GM10248 (cell line): ENCODE measurements at regions of chr2 and their contacts with region 1.

Region 1: GRCh38 chr2:64523666-64524603 is at the start of gene AFTPH:
- DNase-seq: peak; percentile 98
- CTCF ChIP-seq: no peak

Region 2: GRCh38 chr2:64538764-64539433 is 15.0 kb after region 1 on chr2:
- CTCF ChIA-PET with region 1: interaction called, 15 read pairs
- POLR2A ChIA-PET with region 1: interaction called, 8 read pairs
- DNase-seq: no peak
- CTCF ChIP-seq: no peak

Region 3: GRCh38 chr2:64568836-64569235 is 44.9 kb after region 1 on chr2:
- CTCF ChIA-PET with region 1: interaction called, 125 read pairs
- POLR2A ChIA-PET with region 1: no interaction called
- DNase-seq: no peak
- CTCF ChIP-seq: no peak

Region 4: GRCh38 chr2:64609227-64609941 is 85.4 kb after region 1 on chr2:
- CTCF ChIA-PET with region 1: interaction called, 25 read pairs
- POLR2A ChIA-PET with region 1: interaction called, 3 read pairs
- DNase-seq: peak; percentile 91
- CTCF ChIP-seq: peak; percentile 82

Region 5: GRCh38 chr2:64644177-64645004 is 120.5 kb after region 1 on chr2:
- CTCF ChIA-PET with region 1: interaction called, 10 read pairs
- POLR2A ChIA-PET with region 1: no interaction called
- DNase-seq: peak; percentile 75
- CTCF ChIP-seq: no peak

Region 6: GRCh38 chr2:64864674-64865072 is 340.7 kb after region 1 on chr2:
- CTCF ChIA-PET with region 1: interaction called, 26 read pairs
- POLR2A ChIA-PET with region 1: interaction called, 5 read pairs
- DNase-seq: peak; percentile 51
- CTCF ChIP-seq: no peak